ENCODE measurements at regions of chr22 and their contacts with region 1.

Region 1: DNA sequence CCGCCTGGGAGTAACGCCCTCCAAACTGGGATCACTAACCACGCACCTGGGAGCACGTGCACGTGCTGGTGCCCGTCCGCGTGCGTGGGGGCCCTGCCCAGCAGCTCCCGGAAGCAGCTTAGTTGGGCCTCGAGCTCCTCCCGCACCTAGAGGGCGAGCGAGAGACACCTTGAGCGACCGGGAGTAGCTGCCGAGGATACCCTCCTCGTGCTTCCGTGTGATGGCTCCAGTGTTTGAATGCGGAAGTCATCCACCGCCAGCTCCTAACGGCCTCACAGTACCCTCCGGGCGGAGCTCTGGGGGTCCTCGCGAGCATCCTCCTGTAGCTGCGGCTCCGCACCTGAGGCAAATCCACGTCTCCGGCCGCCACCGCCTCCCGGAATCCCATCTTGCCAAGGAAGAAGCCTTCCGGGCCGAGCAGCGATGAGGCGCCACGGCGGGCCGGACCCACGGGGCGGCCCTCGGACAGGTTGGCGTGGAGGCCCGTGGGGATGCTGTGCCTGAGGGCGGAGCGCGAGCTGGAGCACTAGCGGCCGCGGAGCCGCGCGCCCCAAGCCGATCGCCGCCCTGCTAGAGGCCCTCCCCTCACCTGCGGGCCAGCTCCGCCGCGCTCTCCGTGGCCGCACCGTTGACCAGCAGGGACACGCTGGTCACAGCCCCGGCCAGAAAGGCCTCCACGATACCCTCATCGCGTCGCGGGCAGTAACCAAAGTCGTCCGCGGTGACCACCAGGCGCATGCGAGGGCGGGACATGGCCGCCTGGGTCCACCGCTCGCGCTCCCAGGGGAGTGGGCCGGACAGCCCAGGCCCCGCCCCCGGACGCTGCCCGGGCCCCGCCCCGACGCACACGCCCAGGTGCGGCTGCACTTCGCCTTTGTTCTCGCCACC is at the start of gene YDJC:
- DNase-seq: peak; percentile 94
- H3K4me3 Mint-ChIP-seq: peak within 1 kb of the TSS; percentile 86
- H3K27ac Mint-ChIP-seq: peak within 1 kb of the TSS; percentile 83
- H3K4me1 Mint-ChIP-seq: peaks cover 15% of the 10 kb centered on the region
- H3K27me3 Mint-ChIP-seq: no peaks in the 10 kb centered on the region
- CTCF ChIP-seq: peak; percentile 80
- total RNA-seq, gene YDJC: 58.6 and 83.5 TPM in 2 replicates

Region 2: DNA sequence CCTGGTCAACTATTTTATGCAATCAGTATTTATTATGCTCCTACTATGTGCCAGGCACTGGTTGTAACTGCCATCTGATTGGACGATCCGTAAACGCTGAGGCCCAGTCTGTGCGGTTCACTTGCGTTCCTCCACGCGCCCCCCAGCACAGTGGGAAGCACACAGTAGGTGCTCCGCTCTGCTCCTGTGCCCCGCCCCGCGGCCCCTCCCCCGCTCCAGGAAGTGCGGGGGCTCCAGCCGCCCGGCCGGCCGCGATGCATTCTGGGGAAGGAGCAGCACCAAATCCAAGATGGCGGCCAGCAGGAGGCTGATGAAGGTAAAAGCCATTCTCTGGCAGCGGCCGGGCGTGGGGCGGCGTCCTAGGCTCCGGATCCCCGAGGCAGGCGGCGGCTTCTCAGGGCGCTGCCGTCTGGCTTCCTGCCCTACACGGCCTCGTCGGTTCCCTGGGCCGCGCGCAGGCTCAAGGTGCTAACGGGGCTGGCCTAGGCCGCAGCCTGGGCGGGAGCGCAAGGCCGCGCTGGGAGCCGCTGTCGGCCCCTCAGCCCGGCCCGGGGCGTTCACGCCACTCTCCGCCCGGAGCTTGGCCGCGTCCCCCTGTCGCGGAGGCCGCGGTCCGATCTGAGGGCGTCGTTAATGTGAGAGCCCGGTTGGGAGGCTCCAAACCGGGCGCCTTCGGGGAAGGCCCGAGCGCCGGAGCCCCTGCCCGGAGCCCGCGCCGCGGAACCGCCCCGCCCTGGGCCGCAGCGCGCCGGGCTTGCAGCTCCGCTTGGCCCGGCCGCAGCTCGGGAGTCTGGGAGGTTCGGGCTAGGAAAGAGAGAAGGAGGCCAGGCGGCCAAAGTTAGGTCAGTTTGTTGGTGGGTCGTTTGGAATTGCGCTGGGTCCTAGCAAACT is 61.8 kb before region 1 on chr22 and contains the start of gene UBE2L3:
- CTCF ChIA-PET with region 1: interaction called, 8 read pairs
- POLR2A ChIA-PET with region 1: interaction called, 11 read pairs
- intact Hi-C with region 1: no loop called
- DNase-seq: peak; percentile 80
- H3K4me3 Mint-ChIP-seq: peak within 1 kb of the TSS; percentile 83
- H3K27ac Mint-ChIP-seq: peak within 1 kb of the TSS; percentile 90
- H3K4me1 Mint-ChIP-seq: peaks cover 23% of the 10 kb centered on the region
- H3K27me3 Mint-ChIP-seq: no peaks in the 10 kb centered on the region
- CTCF ChIP-seq: no peak
- total RNA-seq, gene UBE2L3: 44.2 and 49.0 TPM in 2 replicates

Region 3: DNA sequence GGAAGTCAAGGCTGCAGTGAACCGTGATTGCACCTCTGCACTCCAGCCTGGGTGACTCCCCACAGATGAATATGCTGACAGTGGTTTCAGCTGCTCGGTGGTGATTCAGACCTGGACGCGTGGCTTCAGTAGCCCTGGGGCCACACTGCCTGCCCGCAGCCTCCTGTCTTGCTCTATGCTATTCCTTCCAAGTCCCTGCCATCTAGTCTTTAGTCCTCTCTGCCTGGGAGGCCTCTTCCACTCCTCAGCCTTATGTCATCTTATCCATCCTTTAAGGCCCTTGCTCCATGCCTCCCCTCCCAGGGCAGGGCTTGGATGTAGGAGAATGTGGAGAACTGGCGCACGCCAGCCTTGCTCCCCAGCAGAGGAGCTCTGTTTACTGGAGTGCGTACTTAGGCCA is 22.7 kb before region 1 on chr22:
- CTCF ChIA-PET with region 1: interaction called, 11 read pairs
- POLR2A ChIA-PET with region 1: interaction called, 9 read pairs
- intact Hi-C with region 1: no loop called
- DNase-seq: peak; percentile 61
- H3K4me3 Mint-ChIP-seq: no peak overlapping the region
- H3K27ac Mint-ChIP-seq: peak overlapping the region; percentile 28
- H3K4me1 Mint-ChIP-seq: peaks cover 5% of the 10 kb centered on the region
- H3K27me3 Mint-ChIP-seq: no peaks in the 10 kb centered on the region
- CTCF ChIP-seq: no peak

Region 4: DNA sequence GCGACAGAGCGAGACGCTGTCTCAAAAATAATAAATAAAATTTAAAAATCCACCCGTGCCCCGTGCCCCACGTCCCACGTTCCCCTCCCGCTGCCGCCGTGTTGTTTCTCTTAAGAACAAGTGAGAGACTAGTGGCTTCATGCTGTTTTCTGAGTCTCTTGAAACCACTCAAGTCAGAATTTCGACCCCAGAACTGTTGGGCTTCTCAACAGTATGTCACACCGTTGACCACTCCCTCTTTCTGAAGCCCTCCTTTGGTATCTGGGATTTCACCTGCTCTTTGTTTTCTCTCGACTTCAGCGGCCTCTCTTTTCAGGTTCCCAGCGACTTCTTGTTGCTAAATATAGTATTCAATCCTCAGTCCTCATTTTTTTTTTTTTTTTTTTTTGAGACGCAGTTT is 37.3 kb after region 1 on chr22:
- CTCF ChIA-PET with region 1: interaction called, 3 read pairs
- POLR2A ChIA-PET with region 1: interaction called, 12 read pairs
- intact Hi-C with region 1: no loop called
- DNase-seq: no peak
- H3K4me3 Mint-ChIP-seq: peak overlapping the region; percentile 99
- H3K27ac Mint-ChIP-seq: peak overlapping the region; percentile 91
- H3K4me1 Mint-ChIP-seq: peaks cover 6% of the 10 kb centered on the region
- H3K27me3 Mint-ChIP-seq: no peaks in the 10 kb centered on the region
- CTCF ChIP-seq: no peak